ENCODE measurements at regions of chr5 and their contacts with region 1.

Region 1: GRCh38 chr5:52915176-52915875 is 73.8 kb upstream of the ITGA2 start:
- DNase-seq: no peak

Region 2: GRCh38 chr5:52665559-52665958 is 249.8 kb before region 1 on chr5:
- intact Hi-C with region 1: loop called in 1 of 2 experiments (anchors 10 kb)
- DNase-seq: no peak

Region 3: DNA sequence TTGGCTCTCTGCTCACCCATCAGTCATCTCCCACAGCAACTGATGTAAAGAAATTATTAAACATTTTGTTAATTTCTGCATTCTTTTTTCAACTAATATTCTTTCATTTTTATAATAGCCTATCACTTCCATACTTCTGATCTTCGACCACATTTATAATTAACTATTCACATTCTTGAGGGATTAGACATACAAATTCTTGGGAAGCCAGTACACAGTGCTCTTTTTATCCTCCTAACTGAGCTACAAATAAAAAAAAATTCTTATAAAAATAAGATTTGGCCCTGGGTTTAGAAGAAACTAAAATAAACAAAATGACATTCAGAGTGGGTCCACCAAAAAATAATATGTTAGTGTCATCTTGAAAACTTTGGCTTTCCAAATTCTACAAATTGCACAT is 231.3 kb before region 1 on chr5:
- intact Hi-C with region 1: loop called in 1 of 2 experiments (anchors 5 kb)
- DNase-seq: no peak

Region 4: DNA sequence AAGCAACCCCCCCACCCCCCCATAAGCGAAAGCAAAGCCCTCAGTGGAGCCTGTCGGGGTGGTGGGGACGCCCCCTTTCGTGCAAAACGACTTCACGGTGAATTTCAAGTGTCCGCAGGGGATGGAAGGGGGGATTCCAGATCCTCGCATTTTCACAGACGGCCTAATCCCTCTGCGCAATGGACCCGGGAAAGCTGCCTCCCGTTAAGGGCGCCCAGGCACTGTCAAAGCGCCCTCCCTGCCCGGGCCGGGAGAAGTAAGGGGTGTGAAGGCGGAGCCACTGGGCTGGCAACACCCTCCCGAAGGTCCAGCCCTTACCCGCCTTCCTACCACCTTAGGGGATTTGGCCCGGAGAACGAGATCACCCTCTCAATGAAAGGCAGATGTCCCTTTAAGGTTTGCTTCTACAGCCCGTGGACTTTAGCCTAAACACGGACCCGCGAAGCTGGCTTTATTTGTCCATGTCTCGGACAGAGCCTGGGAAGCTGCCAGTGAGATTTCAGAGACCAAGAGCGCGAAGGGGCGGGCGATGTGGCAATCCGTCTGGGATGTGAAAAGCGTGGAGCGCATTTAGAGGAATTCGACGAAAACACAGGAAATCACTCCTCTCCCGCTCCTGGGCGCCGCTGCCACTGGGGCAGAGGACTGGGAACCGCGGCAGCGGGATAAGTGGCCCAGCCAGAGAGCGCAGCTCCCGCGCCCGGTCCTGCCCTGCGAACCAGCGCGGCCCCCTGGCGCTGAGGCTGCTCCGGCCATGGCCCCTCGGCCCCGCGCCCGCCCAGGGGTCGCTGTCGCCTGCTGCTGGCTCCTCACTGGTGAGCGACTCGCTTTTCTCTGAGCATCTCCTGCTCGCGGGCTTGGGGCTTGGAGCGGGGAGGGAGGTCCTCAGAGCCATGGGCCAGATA is 127.5 kb before region 1 on chr5 and contains the starts of genes ITGA1 and PELO:
- intact Hi-C with region 1: loop called in 1 of 2 experiments (anchors 5 kb)
- DNase-seq: peak; percentile 94
- total RNA-seq, gene ITGA1: 134 to 213 TPM
- total RNA-seq, gene PELO: 49.4 to 61.8 TPM

Region 5: DNA sequence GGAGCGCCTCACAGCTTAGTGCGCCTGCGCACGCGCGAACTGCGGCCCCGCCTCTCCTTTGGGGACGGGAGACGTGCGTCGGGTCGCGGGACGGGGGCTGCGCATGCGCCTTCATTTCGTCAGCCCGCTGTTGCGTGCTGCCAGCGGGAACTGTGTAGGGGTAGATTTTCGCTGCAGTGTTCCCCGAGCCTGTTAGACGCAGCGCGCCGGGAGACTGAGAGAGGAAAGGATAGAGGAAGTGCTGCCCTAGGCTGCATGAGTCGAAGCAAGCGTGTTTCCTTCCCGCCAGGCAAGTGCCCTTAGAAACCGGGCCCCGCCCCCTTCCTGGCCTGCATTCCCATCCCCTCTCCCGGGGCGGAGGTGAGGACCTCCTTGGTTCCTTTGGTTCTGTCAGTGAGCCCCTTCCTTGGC is 115.3 kb before region 1 on chr5:
- intact Hi-C with region 1: loop called in 1 of 2 experiments (anchors 10 kb)
- DNase-seq: peak; percentile 99